ENCODE measurements at regions of chr19 and their contacts with region 1.

Region 1: DNA sequence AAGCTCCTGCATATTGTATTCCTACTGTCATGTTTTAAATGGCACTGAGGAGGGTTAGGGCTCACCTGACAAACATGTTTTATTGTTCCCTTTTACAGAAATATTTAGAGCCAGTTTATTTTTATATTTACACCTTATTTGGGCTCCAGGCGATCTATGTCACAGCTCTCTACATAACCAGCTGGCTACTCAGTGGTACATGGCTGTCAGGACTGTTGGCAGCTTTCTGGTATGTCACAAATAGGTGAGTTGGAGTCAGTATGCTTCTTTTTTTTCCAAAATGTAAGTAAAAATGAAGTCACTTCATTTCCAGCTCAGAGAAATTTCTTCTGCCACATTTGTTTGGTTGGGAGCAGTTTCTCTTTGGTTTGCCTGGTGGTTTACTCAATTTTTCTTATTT is 31.5 kb downstream of the DPY19L3 start:
- DNase-seq: no peak

Region 2: GRCh38 chr19:31962561-31962996 is 474.5 kb before region 1 on chr19:
- intact Hi-C with region 1: no loop called
- DNase-seq: no peak

Region 3: DNA sequence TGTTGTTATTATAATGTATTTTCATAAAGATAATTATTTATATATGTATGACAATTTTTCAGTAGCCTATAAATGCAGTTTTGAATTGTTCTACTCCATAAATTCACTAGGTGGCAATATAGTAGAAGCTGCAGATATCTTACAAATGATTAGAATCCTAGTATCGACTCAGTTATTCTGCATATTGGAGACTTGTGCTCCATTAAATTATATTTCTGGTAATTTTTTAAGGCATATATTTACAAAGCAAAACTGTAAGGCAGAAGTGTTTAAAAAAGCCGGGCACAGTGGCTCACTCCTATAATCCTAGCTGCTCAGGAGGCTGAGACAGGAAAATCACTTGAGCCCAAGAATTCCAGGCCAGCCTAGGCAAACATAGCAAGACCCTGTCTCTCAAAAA is 27.2 kb after region 1 on chr19:
- intact Hi-C with region 1: loop called in 1 of 2 experiments (anchors 1 kb)
- DNase-seq: no peak